Caco-2 (cell line): ENCODE measurements at regions of chr12 and their contacts with region 1.

Region 1: GRCh38 chr12:113912760-113913329 is 53.3 kb downstream of the RBM19 start:
- DNase-seq: peak; percentile 68 to 75
- H3K4me3 ChIP-seq: no peak overlapping the region
- H3K4me3 Mint-ChIP-seq: no peak overlapping the region
- H3K27ac Mint-ChIP-seq: no peak overlapping the region
- H3K4me1 ChIP-seq: no peaks in the 10 kb centered on the region
- H3K4me1 Mint-ChIP-seq: no peaks in the 10 kb centered on the region
- H3K27me3 ChIP-seq: no peaks in the 10 kb centered on the region
- H3K27me3 Mint-ChIP-seq: no peaks in the 10 kb centered on the region
- CTCF ChIP-seq: peak; percentile 90 to 93

Region 2: GRCh38 chr12:113439606-113440030 is 473.2 kb before region 1 on chr12:
- CTCF ChIA-PET with region 1: no interaction called
- POLR2A ChIA-PET with region 1: no interaction called
- intact Hi-C with region 1: loop called (anchors 1 kb)
- DNase-seq: peak; percentile 68 to 73
- H3K4me3 ChIP-seq: no peak overlapping the region
- H3K4me3 Mint-ChIP-seq: no peak overlapping the region
- H3K27ac Mint-ChIP-seq: no peak overlapping the region
- H3K4me1 ChIP-seq: no peaks in the 10 kb centered on the region
- H3K4me1 Mint-ChIP-seq: peaks cover 6% of the 10 kb centered on the region
- H3K27me3 ChIP-seq: no peaks in the 10 kb centered on the region; the same call in 1 of the 2 replicates
- H3K27me3 Mint-ChIP-seq: no peaks in the 10 kb centered on the region
- CTCF ChIP-seq: peak; percentile 81 to 87

Region 3: DNA sequence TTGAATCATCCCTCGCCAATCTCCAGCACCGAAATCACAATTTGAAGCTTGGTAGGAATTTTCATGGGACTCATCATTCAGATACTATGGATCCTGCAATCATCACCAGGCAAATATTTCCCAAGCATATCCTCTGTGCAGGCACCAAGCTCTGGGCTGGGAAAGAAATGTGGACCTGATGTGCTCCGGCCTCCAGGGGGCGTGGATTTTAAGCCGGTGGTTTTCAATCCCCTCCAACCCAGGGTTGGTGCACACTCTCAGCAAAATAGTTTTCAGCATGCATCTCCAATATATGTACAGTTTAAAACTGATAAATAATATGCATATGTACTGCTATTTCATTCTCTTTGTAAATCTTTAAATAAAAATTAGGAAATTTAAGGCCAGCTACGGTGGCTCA is 45.6 kb before region 1 on chr12:
- CTCF ChIA-PET with region 1: no interaction called
- POLR2A ChIA-PET with region 1: no interaction called
- intact Hi-C with region 1: loop called (anchors 1 kb)
- DNase-seq: peak in 1 of 2 experiments; percentile 40
- H3K4me3 ChIP-seq: no peak overlapping the region
- H3K4me3 Mint-ChIP-seq: no peak overlapping the region
- H3K27ac Mint-ChIP-seq: no peak overlapping the region
- H3K4me1 ChIP-seq: no peaks in the 10 kb centered on the region
- H3K4me1 Mint-ChIP-seq: no peaks in the 10 kb centered on the region
- H3K27me3 ChIP-seq: no peaks in the 10 kb centered on the region
- H3K27me3 Mint-ChIP-seq: no peaks in the 10 kb centered on the region
- CTCF ChIP-seq: peak; percentile 46 to 49

Region 4: GRCh38 chr12:113955109-113955970 is 42.5 kb after region 1 on chr12:
- CTCF ChIA-PET with region 1: no interaction called
- POLR2A ChIA-PET with region 1: no interaction called
- intact Hi-C with region 1: no loop called
- DNase-seq: peak; percentile 54 to 61
- H3K4me3 ChIP-seq: no peak overlapping the region
- H3K4me3 Mint-ChIP-seq: no peak overlapping the region
- H3K27ac Mint-ChIP-seq: no peak overlapping the region
- H3K4me1 ChIP-seq: no peaks in the 10 kb centered on the region
- H3K4me1 Mint-ChIP-seq: no peaks in the 10 kb centered on the region
- H3K27me3 ChIP-seq: no peaks in the 10 kb centered on the region
- H3K27me3 Mint-ChIP-seq: no peaks in the 10 kb centered on the region
- CTCF ChIP-seq: peak; percentile 43 to 69